ENCODE measurements at regions of chr11 and their contacts with region 1.

Region 1: DNA sequence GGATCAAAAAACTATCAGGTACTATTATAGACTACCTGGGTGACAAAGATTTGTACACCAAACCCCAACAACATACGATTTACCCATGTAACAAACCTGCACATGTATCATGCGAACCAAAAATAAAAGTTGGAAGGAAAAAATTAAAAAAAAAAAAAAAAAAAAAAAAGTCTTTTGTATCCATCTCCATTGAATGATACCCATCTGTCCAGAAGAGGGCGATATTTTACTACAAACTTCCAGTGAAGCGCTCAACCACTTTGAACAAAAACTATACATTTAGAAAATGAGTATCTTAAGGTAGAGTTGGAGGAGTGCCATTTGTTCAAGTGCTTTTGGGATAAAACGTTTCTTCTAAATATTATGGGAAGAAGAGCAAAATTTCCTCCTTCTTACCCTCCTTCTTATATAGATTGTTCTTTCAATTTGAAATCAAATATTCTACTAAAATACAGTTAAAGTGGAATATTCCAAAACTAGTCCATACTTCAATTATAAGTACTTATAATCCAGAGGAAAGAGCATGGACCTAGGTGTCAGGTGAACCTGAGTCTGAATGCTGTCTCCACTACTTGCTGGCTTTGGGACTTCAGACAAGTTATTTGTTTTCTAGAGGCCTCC is 23.3 kb downstream of the ARL14EP start:
- DNase-seq: no peak
- ATAC-seq: peak; percentile 34 to 68

Region 2: DNA sequence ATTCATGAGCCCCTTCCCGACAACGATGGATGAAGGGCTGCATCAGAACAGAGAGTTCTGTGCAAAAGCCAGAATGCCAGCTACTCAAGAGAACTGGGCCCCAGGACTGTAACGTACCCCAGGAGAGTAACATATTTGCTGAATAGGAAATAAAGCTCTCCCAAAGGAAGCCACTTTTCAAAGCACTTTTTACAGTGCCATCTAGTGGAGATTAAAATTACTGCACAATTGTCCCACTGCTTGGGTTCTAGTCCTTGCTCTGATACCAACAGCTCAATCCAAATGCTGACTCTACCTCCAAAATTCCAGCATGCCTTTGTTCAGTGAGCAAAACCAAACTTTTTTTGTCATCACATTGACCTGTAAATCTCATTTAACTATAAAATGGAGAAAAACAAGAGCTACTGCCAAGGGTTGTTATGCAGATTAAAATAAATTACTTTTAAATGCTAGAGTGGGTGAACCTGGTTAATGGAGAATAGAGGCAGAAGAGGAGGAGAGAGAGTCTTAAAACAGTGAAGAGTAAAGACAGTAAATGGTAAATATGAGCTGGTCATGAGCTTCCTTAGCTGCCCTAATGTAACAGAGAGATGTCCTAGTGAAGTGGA is 203.0 kb before region 1 on chr11:
- intact Hi-C with region 1: no loop called
- DNase-seq: no peak
- ATAC-seq: peak in 1 of 2 donors; percentile 29

Region 3: GRCh38 chr11:30586251-30587144 is 240.3 kb after region 1 on chr11 and contains the start of gene MPPED2:
- intact Hi-C with region 1: loop called in 1 of 2 experiments (anchors 5 kb)
- DNase-seq: peak; percentile 44
- ATAC-seq: peak; percentile 81 to 84
- total RNA-seq, gene MPPED2: 2.9 to 5.2 TPM

Region 4: DNA sequence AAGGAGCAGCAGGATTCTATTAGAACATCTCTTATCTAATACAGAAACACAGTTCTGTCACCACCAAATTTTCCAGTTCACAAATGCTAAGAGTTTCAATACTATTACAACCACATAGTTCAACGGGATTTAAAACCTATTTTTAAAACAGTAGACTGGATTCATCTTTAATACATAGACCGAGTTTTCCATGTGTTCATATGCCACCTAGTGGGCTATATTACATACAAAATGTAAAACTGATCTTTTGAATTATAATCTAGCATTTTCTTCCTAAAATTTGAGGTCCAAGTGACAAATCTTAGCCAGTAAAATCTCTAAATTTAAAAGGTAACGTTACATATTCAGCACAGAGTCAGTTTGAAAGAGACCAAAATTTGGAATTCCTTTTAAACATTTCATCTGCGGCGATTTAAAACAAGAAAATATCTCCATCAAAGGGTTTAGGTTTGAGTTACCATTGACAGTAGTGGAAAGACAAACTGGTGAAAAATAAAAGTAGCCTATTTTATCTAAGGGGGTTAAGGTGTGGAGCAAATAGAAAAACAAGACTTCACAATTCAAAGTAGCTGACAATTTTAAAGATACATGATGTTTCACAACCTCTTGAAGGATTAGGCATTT is 509.3 kb after region 1 on chr11:
- intact Hi-C with region 1: loop called (anchors 2 to 5 kb)
- DNase-seq: no peak
- ATAC-seq: no peak